ENCODE measurements at regions of chr2 and their contacts with region 1.

Region 1: DNA sequence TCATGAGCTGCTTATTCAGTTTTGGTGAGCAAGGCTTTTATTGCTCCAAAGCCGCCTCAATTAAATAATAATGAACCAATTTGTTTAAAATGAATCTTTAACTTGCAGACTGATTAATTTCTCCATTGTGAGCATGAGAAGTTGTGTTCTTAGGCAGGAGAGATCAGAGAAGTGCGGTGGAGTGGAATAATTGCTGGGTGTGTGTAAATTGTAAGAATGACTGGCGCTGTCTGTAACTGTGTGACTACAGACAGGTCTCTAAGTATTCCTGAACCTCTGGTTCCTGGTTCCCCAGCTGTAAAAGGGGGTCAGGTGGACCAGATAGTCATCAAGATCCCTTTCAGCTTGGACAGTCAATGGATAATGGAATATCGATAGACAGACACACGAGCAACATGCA is 98.0 kb upstream of the EFEMP1 start:
- DNase-seq: no peak
- ATAC-seq: no peak
- H3K4me3 ChIP-seq: no peak overlapping the region
- H3K27ac ChIP-seq: no peak overlapping the region
- H3K4me1 ChIP-seq: no peaks in the 10 kb centered on the region
- H3K27me3 ChIP-seq: peaks cover 5% of the 10 kb centered on the region
- CTCF ChIP-seq: no peak

Region 2: GRCh38 chr2:56132138-56132537 is 110.6 kb after region 1 on chr2:
- CTCF ChIA-PET with region 1: interaction called, 3 read pairs
- POLR2A ChIA-PET with region 1: no interaction called
- in situ Hi-C with region 1: no loop called
- intact Hi-C with region 1: loop called (anchors 10 kb)
- DNase-seq: peak; percentile 13
- ATAC-seq: no peak
- H3K4me3 ChIP-seq: no peak overlapping the region
- H3K27ac ChIP-seq: no peak overlapping the region
- H3K4me1 ChIP-seq: no peaks in the 10 kb centered on the region
- H3K27me3 ChIP-seq: no peaks in the 10 kb centered on the region; the same call in 1 of the 2 replicates
- CTCF ChIP-seq: peak; percentile 65; the same call in 1 of the 2 replicates